AG04450 (cell line): ENCODE measurements at regions of chr7 and their contacts with region 1.

Region 1: GRCh38 chr7:121081327-121081936 is 92.9 kb downstream of the CPED1 start:
- DNase-seq: peak; percentile 62
- H3K4me3 ChIP-seq: no peak overlapping the region
- H3K27ac ChIP-seq: no peak overlapping the region
- H3K27me3 ChIP-seq: no peaks in the 10 kb centered on the region
- CTCF ChIP-seq: peak; percentile 69

Region 2: DNA sequence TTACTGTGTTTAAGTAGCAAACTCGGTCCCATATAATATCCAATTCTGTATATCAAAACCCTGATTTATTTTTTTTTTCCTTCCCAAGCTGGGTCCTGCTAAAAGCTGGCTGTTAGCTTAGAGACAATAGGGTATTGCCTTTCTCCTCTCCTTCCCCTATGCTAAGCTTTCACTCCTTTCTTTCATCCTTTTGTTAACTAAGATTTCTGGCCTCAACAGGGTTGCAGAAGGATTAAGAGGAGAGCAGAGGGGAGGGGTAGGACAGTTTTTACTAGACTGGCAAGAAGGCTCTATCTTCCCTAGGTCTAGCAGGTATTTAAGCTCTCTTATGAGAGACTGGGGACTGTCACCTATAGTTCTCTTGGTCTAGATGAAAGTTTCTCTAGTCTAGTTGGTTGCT is 579.3 kb before region 1 on chr7:
- CTCF ChIA-PET with region 1: no interaction called
- POLR2A ChIA-PET with region 1: no interaction called
- DNase-seq: no peak
- H3K4me3 ChIP-seq: no peak overlapping the region
- H3K27ac ChIP-seq: no peak overlapping the region
- H3K27me3 ChIP-seq: no peaks in the 10 kb centered on the region
- CTCF ChIP-seq: no peak

Region 3: GRCh38 chr7:120933475-120933874 is 148.0 kb before region 1 on chr7:
- CTCF ChIA-PET with region 1: no interaction called
- POLR2A ChIA-PET with region 1: no interaction called
- DNase-seq: no peak
- H3K4me3 ChIP-seq: no peak overlapping the region
- H3K27ac ChIP-seq: no peak overlapping the region
- H3K27me3 ChIP-seq: no peaks in the 10 kb centered on the region
- CTCF ChIP-seq: no peak

Region 4: GRCh38 chr7:120950539-120951308 is 130.7 kb before region 1 on chr7 and contains the start of gene ING3:
- CTCF ChIA-PET with region 1: interaction called, 8 read pairs
- POLR2A ChIA-PET with region 1: interaction called, 17 read pairs
- DNase-seq: peak; percentile 96
- H3K4me3 ChIP-seq: peak within 1 kb of the TSS; percentile 89
- H3K27ac ChIP-seq: peak within 1 kb of the TSS; percentile 93
- H3K27me3 ChIP-seq: no peaks in the 10 kb centered on the region
- CTCF ChIP-seq: no peak
- polyA plus RNA-seq, gene ING3: 9.8 and 14.5 TPM in 2 replicates

Region 5: DNA sequence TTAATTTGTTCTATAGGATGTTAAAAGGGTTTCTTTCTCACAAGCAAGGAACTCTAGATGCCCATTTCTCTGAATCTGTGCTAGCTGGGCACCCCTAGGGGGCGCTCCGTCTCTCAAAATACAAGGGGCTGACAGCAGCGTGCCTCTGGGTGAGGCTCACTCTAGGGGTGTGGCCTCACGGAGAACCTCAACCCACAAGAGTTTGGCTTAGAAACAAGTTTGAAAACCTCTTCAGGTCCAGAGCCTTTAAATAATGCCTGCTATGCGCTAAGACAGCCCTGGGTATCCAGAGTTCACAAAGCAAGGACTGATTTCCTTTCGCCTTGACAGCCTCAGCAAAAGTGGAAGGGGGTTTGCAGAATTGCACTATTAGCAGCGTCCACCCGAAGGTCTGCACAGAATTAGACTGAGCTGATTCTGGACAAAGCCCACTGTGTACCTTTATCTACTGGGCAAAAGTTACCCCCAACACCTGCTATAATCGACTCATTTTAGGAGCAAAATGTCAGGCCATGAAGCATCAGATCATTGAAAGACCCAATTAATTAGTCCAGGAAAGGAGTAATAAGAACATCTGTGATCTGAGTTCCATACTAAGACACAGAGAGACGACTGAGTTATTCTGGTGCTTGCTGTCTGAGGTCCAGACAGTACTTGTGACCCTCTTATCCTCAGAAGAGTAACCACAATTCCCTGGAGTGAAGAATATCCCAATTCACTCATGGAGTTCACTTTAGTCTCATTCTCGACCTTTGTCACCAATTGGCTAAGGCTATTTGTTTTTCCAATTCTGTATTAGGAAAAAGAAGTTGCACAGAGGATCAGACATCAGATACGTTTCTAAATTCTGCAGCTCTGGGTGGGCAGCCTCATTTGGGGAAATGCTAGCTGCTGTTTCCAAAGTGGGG is 93.5 kb before region 1 on chr7:
- CTCF ChIA-PET with region 1: interaction called, 178 read pairs
- POLR2A ChIA-PET with region 1: interaction called, 62 read pairs
- DNase-seq: peak; percentile 90
- H3K4me3 ChIP-seq: peak overlapping the region; percentile 76
- H3K27ac ChIP-seq: peak overlapping the region; percentile 40
- H3K27me3 ChIP-seq: no peaks in the 10 kb centered on the region
- CTCF ChIP-seq: peak; percentile 99

Region 6: DNA sequence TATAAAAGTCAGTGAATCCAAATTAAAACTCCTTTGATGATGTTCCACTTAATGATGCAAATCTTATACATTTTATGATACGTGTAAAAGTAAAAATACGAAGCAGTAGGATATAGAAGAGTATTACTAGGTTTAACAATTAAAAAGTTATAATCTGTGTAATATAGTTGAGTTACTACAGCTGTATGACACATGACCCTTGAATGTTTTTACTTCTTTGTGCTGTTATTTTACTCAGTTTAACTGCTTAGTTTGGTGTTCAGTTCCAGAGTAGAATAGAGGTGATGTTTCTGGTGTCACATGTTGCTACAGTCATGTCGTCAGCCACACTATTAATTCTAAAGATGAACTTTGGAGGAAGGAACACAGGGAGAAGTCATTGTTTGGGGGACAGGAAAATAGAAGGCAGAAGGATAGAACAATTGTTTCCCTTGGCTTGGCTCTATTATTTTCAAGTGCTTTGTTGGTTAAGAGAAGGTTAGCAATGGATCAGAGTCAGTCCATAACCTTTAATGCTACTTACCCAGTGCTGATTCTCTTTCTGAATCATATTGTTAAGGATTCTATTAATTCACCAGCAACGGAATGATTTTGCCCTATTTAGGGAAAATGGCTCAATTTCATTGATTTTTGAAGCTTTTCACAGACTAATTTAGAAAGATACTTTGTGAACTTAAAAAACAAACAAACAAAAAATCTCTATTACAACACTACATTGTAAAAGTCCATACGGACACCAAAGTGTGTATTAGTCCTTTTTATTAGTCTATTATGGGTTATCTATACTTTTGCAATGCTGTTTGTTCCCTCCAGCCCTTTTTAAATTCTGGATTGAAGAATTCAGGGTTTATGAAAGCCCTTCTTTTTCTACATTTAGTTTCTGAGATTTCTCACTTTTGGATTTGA is 19.5 kb before region 1 on chr7:
- CTCF ChIA-PET with region 1: interaction called, 10 read pairs
- POLR2A ChIA-PET with region 1: interaction called, 4 read pairs
- DNase-seq: no peak
- H3K4me3 ChIP-seq: no peak overlapping the region
- H3K27ac ChIP-seq: no peak overlapping the region
- H3K27me3 ChIP-seq: no peaks in the 10 kb centered on the region
- CTCF ChIP-seq: no peak